ENCODE measurements at regions of chr1 and their contacts with region 1.

Region 1: GRCh38 chr1:19974822-19975416 is 4.5 kb downstream of the PLA2G2A start:
- DNase-seq: peak; percentile 99
- ATAC-seq: peak; percentile 94
- H3K4me3 ChIP-seq: peak overlapping the region in 1 of 3 experiments; percentile 42; a peak in 2 of 6 replicates
- H3K27ac ChIP-seq: peak overlapping the region; percentile 79
- H3K4me1 ChIP-seq: peaks cover 68% of the 10 kb centered on the region
- H3K27me3 ChIP-seq: no peaks in the 10 kb centered on the region
- CTCF ChIP-seq: peak; percentile 95
- EP300 ChIP-seq: peak; percentile 84 to 93; a peak in 3 of 4 replicates
- POLR2A ChIP-seq: no peak
- RAD21 ChIP-seq: peak; percentile 98

Region 2: GRCh38 chr1:19861034-19861433 is 113.9 kb before region 1 on chr1:
- CTCF ChIA-PET with region 1: no interaction called
- POLR2A ChIA-PET with region 1: no interaction called
- in situ Hi-C with region 1: no loop called
- intact Hi-C with region 1: no loop called
- DNase-seq: no peak
- ATAC-seq: no peak; the same call in 1 of the 3 replicates
- H3K4me3 ChIP-seq: no peak overlapping the region
- H3K27ac ChIP-seq: no peak overlapping the region
- H3K4me1 ChIP-seq: peaks cover 29% of the 10 kb centered on the region
- H3K27me3 ChIP-seq: 0 out of 5 replicates have a peak, but pooled peaks cover 0 to 3% of the 10 kb centered on the region in 2 experiments
- CTCF ChIP-seq: no peak
- EP300 ChIP-seq: no peak
- POLR2A ChIP-seq: no peak
- RAD21 ChIP-seq: no peak

Region 3: GRCh38 chr1:19882111-19883071 is 92.5 kb before region 1 on chr1 and contains the start of gene OTUD3:
- CTCF ChIA-PET with region 1: no interaction called
- POLR2A ChIA-PET with region 1: no interaction called
- in situ Hi-C with region 1: no loop called
- intact Hi-C with region 1: loop called (anchors 1 kb)
- DNase-seq: peak; percentile 97
- ATAC-seq: peak; percentile 93
- H3K4me3 ChIP-seq: peak within 1 kb of the TSS; percentile 80 to 82 (median 81)
- H3K27ac ChIP-seq: peak within 1 kb of the TSS; percentile 82
- H3K4me1 ChIP-seq: peaks cover 49% of the 10 kb centered on the region
- H3K27me3 ChIP-seq: no peaks in the 10 kb centered on the region; a peak in 1 of 5 replicates
- CTCF ChIP-seq: peak; percentile 93
- EP300 ChIP-seq: no peak; a peak in 1 of 4 replicates
- POLR2A ChIP-seq: peak; percentile 68 to 87
- RAD21 ChIP-seq: peak; percentile 56; the same call in 1 of the 2 replicates
- total RNA-seq, gene OTUD3: 5.2 and 7.5 TPM in 2 replicates

Region 4: DNA sequence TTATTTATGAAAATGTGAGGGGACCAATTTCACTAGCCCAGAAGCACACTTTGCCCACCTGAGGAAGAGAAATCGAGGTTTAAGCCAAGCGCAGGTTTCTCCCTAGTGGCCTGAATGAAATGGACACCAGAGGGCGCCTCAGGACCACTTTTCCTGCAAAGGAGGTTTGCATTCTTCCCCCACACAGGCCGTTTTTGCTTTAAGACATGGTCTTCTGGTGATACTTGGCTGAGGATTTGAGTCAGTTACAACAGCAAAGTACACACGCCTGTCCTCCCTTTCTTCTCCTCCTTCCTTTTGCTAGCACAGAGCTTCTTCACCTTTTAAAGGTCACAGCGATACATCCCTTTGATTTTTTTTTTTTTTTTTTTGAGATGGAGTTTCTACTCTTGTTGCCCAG is 56.9 kb before region 1 on chr1:
- CTCF ChIA-PET with region 1: interaction called, 11 read pairs
- POLR2A ChIA-PET with region 1: no interaction called
- in situ Hi-C with region 1: loop called (anchors 5 kb)
- intact Hi-C with region 1: no loop called
- DNase-seq: peak; percentile 74
- ATAC-seq: peak; percentile 67
- H3K4me3 ChIP-seq: no peak overlapping the region
- H3K27ac ChIP-seq: no peak overlapping the region
- H3K4me1 ChIP-seq: peaks cover 43% of the 10 kb centered on the region
- H3K27me3 ChIP-seq: no peaks in the 10 kb centered on the region
- CTCF ChIP-seq: peak; percentile 93
- EP300 ChIP-seq: no peak
- POLR2A ChIP-seq: no peak
- RAD21 ChIP-seq: peak; percentile 91

Region 5: DNA sequence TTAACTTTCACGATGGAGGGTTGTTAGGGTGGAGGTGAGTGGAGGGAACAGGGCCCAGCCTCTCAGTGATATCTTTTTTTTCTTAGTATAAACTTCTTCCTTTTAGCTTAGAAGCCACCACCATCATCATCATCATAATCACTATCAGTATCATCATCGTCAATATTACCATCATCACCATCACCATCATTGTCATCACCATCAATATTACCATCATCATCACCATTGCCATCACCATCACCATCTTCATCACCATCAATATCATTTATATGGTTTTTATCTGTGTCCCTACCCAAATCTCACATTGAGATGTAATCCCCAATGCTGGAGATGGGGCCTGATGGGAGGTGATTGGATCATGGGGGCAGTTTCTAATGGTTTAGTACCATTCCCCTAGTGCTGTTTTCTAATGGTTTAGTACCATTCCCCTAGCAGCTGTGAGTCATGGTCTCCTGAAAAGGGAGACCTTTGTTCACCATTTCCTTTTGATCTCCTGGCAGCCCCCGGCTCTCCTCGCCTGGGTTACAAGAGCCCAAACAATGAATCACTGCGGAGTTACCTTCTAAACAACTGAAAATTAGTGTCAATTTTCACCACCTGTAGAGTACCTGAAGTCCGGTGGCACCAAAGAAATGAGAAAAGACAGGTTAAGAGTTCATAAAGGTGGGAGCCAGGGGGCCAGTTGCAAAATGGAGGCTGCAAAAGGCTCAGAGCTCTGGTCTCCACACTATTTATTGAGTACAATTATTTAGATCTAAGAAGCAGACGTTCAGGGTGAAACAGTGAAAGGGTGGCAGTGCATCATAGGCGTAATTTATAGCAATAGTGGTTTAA is 48.4 kb before region 1 on chr1:
- CTCF ChIA-PET with region 1: no interaction called
- POLR2A ChIA-PET with region 1: interaction called, 14 read pairs
- in situ Hi-C with region 1: loop called (anchors 5 kb)
- intact Hi-C with region 1: loop called (anchors 2 kb)
- DNase-seq: peak; percentile 96
- ATAC-seq: peak; percentile 78
- H3K4me3 ChIP-seq: peak overlapping the region in 2 of 3 experiments; percentile 17 to 27; a peak in 3 of 6 replicates
- H3K27ac ChIP-seq: peak overlapping the region; percentile 94
- H3K4me1 ChIP-seq: peaks cover 89% of the 10 kb centered on the region
- H3K27me3 ChIP-seq: no peaks in the 10 kb centered on the region
- CTCF ChIP-seq: no peak
- EP300 ChIP-seq: peak; percentile 85 to 88
- POLR2A ChIP-seq: peak in 1 of 2 experiments; percentile 15; a peak in 1 of 4 replicates
- RAD21 ChIP-seq: no peak

Region 6: GRCh38 chr1:19988267-19989006 is 13.5 kb after region 1 on chr1:
- CTCF ChIA-PET with region 1: interaction called, 3 read pairs
- POLR2A ChIA-PET with region 1: interaction called, 10 read pairs
- in situ Hi-C with region 1: no loop called
- intact Hi-C with region 1: no loop called
- DNase-seq: peak; percentile 25
- ATAC-seq: no peak
- H3K4me3 ChIP-seq: no peak overlapping the region
- H3K27ac ChIP-seq: no peak overlapping the region
- H3K4me1 ChIP-seq: peaks cover 30% of the 10 kb centered on the region
- H3K27me3 ChIP-seq: no peaks in the 10 kb centered on the region
- CTCF ChIP-seq: no peak
- EP300 ChIP-seq: no peak
- POLR2A ChIP-seq: no peak
- RAD21 ChIP-seq: no peak

Region 7: DNA sequence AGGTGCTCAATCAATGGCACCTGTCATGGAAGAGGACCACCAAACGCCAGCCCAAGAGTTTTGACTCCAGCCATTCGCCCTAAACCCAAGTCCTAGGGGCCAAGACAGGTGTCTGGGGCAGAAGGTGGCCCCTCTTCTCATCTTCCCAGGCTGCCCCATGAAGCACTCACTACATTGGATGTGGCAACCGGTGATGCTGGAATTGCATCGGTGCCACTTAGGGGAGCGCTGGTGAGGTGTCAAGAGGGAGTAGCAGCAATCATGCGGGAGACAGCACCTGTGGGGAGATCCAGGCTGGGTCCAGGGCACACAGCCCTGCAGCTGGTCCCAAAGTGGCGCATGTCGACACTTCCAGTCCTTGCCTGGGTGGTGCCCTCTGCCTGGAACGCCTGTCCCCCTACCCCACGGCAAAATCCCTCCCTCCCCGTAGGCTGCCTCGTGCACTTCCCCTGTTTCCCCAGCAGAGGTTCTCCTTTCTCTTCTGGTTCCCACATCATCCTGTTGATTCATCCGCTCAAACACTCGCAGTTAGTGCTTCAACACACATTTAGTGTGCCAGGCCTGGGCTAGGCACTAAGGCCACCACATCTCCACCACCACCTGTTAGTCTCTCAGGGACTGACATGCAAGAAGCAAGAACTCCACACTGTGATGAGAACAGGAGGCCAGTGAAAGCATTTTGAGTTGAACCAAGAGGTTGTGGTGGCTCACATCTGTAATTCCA is 125.9 kb after region 1 on chr1:
- CTCF ChIA-PET with region 1: no interaction called
- POLR2A ChIA-PET with region 1: no interaction called
- in situ Hi-C with region 1: no loop called
- intact Hi-C with region 1: no loop called
- DNase-seq: peak; percentile 48
- ATAC-seq: peak; percentile 94
- H3K4me3 ChIP-seq: no peak overlapping the region
- H3K27ac ChIP-seq: no peak overlapping the region
- H3K4me1 ChIP-seq: no peaks in the 10 kb centered on the region
- H3K27me3 ChIP-seq: 0 out of 5 replicates have a peak, but pooled peaks cover 0 to 4% of the 10 kb centered on the region in 2 experiments
- CTCF ChIP-seq: peak; percentile 77
- EP300 ChIP-seq: no peak
- POLR2A ChIP-seq: no peak
- RAD21 ChIP-seq: peak; percentile 71

Region 8: DNA sequence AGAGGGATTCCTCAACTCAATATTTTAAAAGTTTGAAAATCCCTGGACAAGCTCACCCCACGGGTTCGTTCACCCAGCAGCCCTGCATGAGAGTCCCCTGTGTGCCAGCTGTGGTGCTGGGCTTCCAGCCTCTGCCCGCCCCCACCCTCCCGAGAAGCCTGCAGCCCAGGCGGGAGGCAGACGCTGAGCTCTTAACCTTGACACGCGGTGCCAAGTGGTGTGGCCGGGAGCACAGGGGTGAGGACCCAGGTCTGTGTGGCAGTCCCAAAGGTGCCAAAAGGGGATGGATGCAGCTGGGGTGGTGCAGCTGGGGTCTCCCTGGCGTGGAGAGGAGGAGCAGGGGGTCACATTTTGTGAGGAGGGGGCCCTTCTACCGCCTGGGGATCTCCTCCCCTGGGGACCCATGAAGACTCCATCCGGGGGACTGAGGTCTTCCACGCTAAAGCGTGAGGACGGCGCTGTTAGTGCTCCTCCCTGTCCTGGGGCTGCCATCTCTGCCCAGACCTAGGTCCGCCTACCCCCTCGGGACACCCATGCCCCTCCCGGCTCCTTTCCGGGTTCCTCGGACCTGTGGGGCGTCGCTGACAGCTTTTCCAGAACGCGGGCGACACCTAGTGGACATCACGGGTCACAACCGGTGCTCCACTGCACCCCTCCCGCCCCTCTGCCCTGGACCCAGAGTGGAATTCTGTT is 177.1 kb after region 1 on chr1:
- CTCF ChIA-PET with region 1: interaction called, 15 read pairs
- POLR2A ChIA-PET with region 1: interaction called, 11 read pairs
- in situ Hi-C with region 1: loop called (anchors 5 kb)
- intact Hi-C with region 1: loop called (anchors 1 kb)
- DNase-seq: peak; percentile 60
- ATAC-seq: peak; percentile 92
- H3K4me3 ChIP-seq: peak overlapping the region in 1 of 3 experiments; percentile 54; a peak in 1 of 6 replicates
- H3K27ac ChIP-seq: no peak overlapping the region
- H3K4me1 ChIP-seq: peaks cover 17% of the 10 kb centered on the region
- H3K27me3 ChIP-seq: peaks cover 0 to 1% of the 10 kb centered on the region in 2 experiments; a peak in 1 of 5 replicates
- CTCF ChIP-seq: peak; percentile 98
- EP300 ChIP-seq: no peak
- POLR2A ChIP-seq: no peak
- RAD21 ChIP-seq: peak; percentile 96

Region 9: GRCh38 chr1:20194757-20195461 is 220.0 kb after region 1 on chr1:
- CTCF ChIA-PET with region 1: interaction called, 11 read pairs
- POLR2A ChIA-PET with region 1: no interaction called
- in situ Hi-C with region 1: loop called (anchors 10 kb)
- intact Hi-C with region 1: no loop called
- DNase-seq: peak; percentile 44
- ATAC-seq: peak; percentile 81
- H3K4me3 ChIP-seq: no peak overlapping the region
- H3K27ac ChIP-seq: no peak overlapping the region
- H3K4me1 ChIP-seq: peaks cover 5% of the 10 kb centered on the region; the same call in 1 of the 2 replicates
- H3K27me3 ChIP-seq: peaks cover 3 to 28% of the 10 kb centered on the region in 2 experiments; a peak in 4 of 5 replicates
- CTCF ChIP-seq: peak; percentile 80
- EP300 ChIP-seq: no peak
- POLR2A ChIP-seq: no peak
- RAD21 ChIP-seq: peak; percentile 52; the same call in 1 of the 2 replicates